T-cell (primary cell): ENCODE measurements at regions of chr3 and their contacts with region 1.

Region 1: GRCh38 chr3:58082047-58082446 is 73.8 kb downstream of the FLNB start:
- DNase-seq: peak in 34 of 35 experiments; percentile 2 to 84 (median 44)
- ATAC-seq: peak; percentile 88 to 95 (median 94)
- H3K4me3 ChIP-seq: peak overlapping the region in 1 of 2 donors; percentile 10
- H3K4me3 Mint-ChIP-seq: peak overlapping the region; percentile 13 to 61 (median 32)
- H3K27ac ChIP-seq: peak overlapping the region; percentile 39
- H3K27ac Mint-ChIP-seq: peak overlapping the region; percentile 91 to 92
- H3K4me1 ChIP-seq: peaks cover 37 to 43% of the 10 kb centered on the region in 2 experiments
- H3K4me1 Mint-ChIP-seq: peaks cover 52 to 69% (median 53%) of the 10 kb centered on the region in 3 donors
- H3K27me3 ChIP-seq: no peaks in the 10 kb centered on the region
- H3K27me3 Mint-ChIP-seq: no peaks in the 10 kb centered on the region

Region 2: DNA sequence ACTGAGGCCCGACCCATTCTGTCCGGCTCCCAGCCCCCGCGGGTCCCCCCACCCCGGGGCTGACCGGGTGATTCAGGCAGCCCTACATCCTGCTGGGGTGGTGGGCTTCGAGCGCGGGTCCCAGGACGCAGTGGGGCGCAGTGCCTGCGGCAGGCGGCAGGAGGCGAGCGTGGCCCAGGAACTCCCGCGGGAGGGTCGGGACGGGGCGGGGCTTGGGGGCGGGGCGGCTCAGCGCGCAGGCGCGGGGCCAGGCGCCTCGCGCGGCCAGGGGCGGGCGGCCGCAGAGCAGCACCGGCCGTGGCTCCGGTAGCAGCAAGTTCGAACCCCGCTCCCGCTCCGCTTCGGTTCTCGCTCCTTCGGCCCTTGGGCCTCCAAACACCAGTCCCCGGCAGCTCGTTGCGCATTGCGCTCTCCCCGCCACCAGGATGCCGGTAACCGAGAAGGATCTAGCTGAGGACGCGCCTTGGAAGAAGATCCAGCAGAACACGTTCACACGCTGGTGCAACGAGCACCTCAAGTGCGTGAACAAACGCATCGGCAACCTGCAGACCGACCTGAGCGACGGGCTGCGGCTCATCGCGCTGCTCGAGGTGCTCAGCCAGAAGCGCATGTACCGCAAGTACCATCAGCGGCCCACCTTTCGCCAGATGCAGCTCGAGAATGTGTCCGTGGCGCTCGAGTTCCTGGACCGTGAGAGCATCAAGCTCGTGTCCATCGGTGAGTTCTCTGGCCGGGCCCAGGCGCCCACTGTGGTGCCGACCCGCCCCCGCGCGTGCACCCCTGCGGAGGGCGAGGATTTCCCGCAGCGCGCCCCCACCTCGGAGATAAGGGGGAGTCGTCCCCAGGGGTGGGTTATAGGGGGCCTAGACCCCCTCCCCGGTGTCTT is 73.7 kb before region 1 on chr3 and contains the start of gene FLNB:
- CTCF ChIA-PET with region 1: interaction called, 3 read pairs
- POLR2A ChIA-PET with region 1: interaction called in 1 of 2 experiments, 10 read pairs
- DNase-seq: peak; percentile 46 to 89 (median 72)
- ATAC-seq: peak; percentile 81 to 89 (median 84)
- H3K4me3 ChIP-seq: peak within 1 kb of the TSS; percentile 91 to 99
- H3K4me3 Mint-ChIP-seq: peak within 1 kb of the TSS; percentile 86 to 91 (median 90)
- H3K27ac ChIP-seq: peak within 1 kb of the TSS; percentile 52
- H3K27ac Mint-ChIP-seq: peak within 1 kb of the TSS; percentile 59 to 86
- H3K4me1 ChIP-seq: peaks cover 18 to 46% of the 10 kb centered on the region in 2 experiments
- H3K4me1 Mint-ChIP-seq: peaks cover 36 to 43% (median 40%) of the 10 kb centered on the region in 3 donors
- H3K27me3 ChIP-seq: peaks cover 0 to 3% of the 10 kb centered on the region in 2 experiments
- H3K27me3 Mint-ChIP-seq: no peaks in the 10 kb centered on the region
- total RNA-seq, gene FLNB: 37.0 to 79.7 (median 39.4) TPM

Region 3: DNA sequence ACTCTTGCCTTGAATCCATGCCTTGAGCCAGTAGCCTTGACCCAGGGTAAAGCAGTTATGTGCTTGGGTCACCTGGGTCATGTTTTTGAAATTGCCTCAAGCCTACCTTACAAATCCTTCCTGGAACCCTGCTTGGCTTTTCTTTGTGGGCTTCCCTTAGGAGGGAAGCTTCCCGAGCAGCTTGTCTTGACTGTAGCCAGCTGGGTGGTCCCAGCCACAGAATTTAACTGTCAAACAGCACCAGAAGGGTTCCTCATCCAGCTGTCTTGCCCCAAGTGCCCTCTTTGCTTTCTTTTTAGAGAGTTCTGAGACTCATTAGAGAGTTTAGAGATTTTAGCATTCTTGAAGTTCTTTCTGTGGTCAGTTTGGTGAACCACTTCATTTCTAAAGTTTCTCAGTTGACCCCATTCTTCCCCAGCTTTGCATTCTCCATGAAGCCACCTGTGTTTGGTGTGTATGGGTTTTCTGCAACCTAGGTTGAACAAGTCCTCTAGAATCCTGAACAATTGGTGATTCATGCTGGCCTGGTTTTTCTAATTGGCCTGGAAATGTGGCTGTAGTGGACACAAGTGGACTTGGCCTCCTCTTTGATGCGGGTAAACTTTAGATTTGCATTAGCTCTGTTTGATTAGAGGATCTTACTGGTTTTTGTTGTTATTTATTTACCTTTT is 40.3 kb before region 1 on chr3:
- CTCF ChIA-PET with region 1: interaction called in 1 of 2 experiments, 4 read pairs
- POLR2A ChIA-PET with region 1: interaction called in 1 of 2 experiments, 14 read pairs
- DNase-seq: no peak
- ATAC-seq: no peak
- H3K4me3 ChIP-seq: no peak overlapping the region
- H3K4me3 Mint-ChIP-seq: peak overlapping the region in 1 of 3 donors; percentile 7
- H3K27ac ChIP-seq: no peak overlapping the region
- H3K27ac Mint-ChIP-seq: peak overlapping the region in 1 of 2 donors; percentile 25
- H3K4me1 ChIP-seq: peaks cover 8 to 25% of the 10 kb centered on the region in 2 experiments
- H3K4me1 Mint-ChIP-seq: peaks cover 51 to 73% (median 63%) of the 10 kb centered on the region in 3 donors
- H3K27me3 ChIP-seq: no peaks in the 10 kb centered on the region
- H3K27me3 Mint-ChIP-seq: no peaks in the 10 kb centered on the region

Region 4: DNA sequence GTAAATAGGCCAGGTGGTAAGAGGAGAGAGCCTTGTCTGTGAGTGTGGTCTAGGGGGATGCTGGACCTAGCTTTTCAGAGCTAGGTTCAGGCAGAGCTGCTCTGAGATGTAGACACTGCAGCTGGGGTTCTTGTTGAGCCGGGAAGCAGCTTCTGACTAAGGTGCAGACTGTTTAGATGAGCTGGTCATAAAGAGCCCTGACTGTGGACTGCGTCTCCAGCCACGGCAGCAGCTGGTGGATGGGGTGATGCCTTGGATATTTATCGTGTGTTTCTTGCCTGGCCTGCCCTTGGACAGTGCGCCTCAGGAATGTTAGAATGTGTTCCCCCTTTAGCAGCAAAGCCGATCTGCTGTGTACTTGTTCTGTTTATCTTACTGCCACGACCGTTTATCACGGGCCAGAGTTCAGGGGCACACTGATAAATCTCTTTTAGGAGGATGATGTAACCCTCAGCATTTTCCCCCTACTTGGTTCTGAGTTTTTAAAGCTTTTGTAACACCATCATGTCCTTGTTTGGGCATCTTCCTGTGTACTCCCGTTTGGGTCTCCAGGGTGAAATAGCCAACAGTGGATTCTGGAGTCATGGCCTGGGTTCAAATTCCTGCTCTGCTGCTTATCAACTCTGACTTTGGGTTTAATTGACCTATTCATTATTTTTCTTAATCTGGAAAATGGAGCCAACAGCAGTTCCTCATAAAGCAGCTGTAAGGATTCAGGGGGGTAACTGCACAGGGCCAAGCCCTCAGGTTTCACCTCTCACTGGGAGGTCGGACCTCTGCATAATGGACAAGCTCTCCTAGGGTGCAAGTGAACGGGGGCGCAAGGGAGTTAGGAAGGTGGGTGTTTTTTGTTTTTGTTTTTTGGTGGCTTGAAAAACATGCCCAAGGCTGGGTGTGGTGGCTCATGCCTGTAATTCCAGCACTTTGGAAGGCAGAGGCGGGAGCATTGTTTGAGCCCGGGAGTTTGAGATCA is 22.4 kb before region 1 on chr3:
- CTCF ChIA-PET with region 1: no interaction called
- POLR2A ChIA-PET with region 1: no interaction called
- DNase-seq: no peak
- ATAC-seq: no peak
- H3K4me3 ChIP-seq: no peak overlapping the region
- H3K4me3 Mint-ChIP-seq: no peak overlapping the region
- H3K27ac ChIP-seq: no peak overlapping the region
- H3K27ac Mint-ChIP-seq: peak overlapping the region in 1 of 2 donors; percentile 5
- H3K4me1 ChIP-seq: peaks cover 0 to 7% of the 10 kb centered on the region in 2 experiments
- H3K4me1 Mint-ChIP-seq: peaks cover 21 to 45% (median 26%) of the 10 kb centered on the region in 3 donors
- H3K27me3 ChIP-seq: no peaks in the 10 kb centered on the region
- H3K27me3 Mint-ChIP-seq: no peaks in the 10 kb centered on the region